ENCODE measurements at regions of chr5 and their contacts with region 1.

Region 1: GRCh38 chr5:142151436-142152383 is 43.1 kb downstream of the NDFIP1 start:
- DNase-seq: peak in 1 of 2 donors; percentile 36
- H3K4me3 ChIP-seq: no peak overlapping the region
- H3K27ac ChIP-seq: no peak overlapping the region
- H3K4me1 ChIP-seq: no peaks in the 10 kb centered on the region
- H3K27me3 ChIP-seq: no peaks in the 10 kb centered on the region
- CTCF ChIP-seq: peak; percentile 37 to 82 (median 75)
- POLR2A ChIP-seq: no peak

Region 2: GRCh38 chr5:141430332-141431113 is 721.2 kb before region 1 on chr5 and contains the start of gene PCDHGA12:
- intact Hi-C with region 1: no loop called
- DNase-seq: no peak
- H3K4me3 ChIP-seq: peak within 1 kb of the TSS; percentile 26 to 48 (median 36)
- H3K27ac ChIP-seq: no peak within 1 kb of the TSS
- H3K4me1 ChIP-seq: no peaks in the 10 kb centered on the region
- H3K27me3 ChIP-seq: no peaks in the 10 kb centered on the region
- CTCF ChIP-seq: no peak
- POLR2A ChIP-seq: no peak
- total RNA-seq, gene PCDHGA12: 9.8 to 12.0 (median 11.1) TPM

Region 3: DNA sequence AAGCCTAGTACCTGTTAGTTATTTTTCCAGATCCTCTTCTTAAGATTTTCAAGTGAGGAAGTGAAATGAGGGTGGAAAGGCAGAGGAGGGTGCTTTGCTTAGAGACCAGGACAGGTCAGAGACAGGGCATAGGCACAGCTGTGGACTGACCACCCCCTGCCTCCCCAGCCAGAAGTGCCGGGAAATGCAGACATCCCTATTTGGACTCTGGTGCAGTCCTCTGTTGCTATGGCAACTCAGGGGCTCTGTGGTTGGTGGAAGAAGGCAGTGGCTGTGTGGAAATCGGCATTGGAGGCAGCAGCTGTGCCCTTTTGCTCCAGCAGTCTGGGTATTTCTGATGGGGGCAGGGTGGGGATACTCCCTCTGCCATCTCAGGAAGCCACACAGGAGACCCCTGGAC is 86.4 kb before region 1 on chr5:
- intact Hi-C with region 1: no loop called
- DNase-seq: no peak
- H3K4me3 ChIP-seq: no peak overlapping the region
- H3K27ac ChIP-seq: no peak overlapping the region
- H3K4me1 ChIP-seq: no peaks in the 10 kb centered on the region
- H3K27me3 ChIP-seq: no peaks in the 10 kb centered on the region
- CTCF ChIP-seq: no peak
- POLR2A ChIP-seq: no peak

Region 4: GRCh38 chr5:142108432-142109330 is 43.0 kb before region 1 on chr5 and contains the start of gene NDFIP1:
- intact Hi-C with region 1: no loop called
- DNase-seq: peak; percentile 75 to 83
- H3K4me3 ChIP-seq: peak within 1 kb of the TSS; percentile 58 to 99 (median 83)
- H3K27ac ChIP-seq: peak within 1 kb of the TSS; percentile 98 to 100
- H3K4me1 ChIP-seq: peaks cover 3 to 6% of the 10 kb centered on the region in 2 donors
- H3K27me3 ChIP-seq: no peaks in the 10 kb centered on the region
- CTCF ChIP-seq: peak in 1 of 3 donors; percentile 31
- POLR2A ChIP-seq: peak; percentile 34
- total RNA-seq, gene NDFIP1: 115 to 135 (median 117) TPM

Region 5: DNA sequence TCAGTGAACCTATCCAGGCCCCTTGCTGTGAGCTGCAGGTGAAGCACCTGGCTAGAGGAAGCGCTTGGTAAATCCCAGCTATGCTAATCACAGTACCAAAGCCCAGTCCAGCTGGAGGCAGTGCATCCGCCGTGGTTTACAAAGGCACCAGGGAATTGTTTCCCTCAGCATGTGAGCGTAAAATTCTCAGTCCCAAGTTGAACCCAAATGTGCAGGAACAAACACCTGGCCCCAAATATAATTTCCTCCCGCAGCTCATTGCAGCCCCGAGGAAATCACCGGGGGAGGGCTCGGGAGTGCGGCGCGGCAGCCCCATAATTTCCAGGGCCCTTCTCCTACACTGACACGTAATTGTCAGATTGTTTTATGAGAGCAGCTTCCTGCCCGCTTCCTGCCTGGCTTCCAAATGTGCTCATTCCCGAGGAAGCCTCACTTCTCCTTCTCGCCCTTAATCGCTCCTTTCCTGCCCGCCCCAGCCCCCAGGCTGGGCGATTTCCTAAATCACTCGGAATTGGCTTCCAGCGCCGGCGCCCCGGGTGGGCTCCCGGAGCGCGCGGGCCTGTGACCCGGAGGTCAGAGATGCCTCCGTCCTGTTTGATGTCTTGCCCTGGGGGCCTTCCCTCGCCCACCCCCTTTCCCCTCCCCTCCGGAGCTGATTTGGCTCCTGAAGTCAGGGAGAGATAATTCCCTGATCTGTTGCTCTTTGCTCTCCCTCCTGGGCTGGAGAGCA is 399.8 kb after region 1 on chr5:
- intact Hi-C with region 1: loop called (anchors 2 kb)
- DNase-seq: no peak
- H3K4me3 ChIP-seq: peak overlapping the region; percentile 0 to 64 (median 37)
- H3K27ac ChIP-seq: peak overlapping the region in 1 of 2 donors; percentile 38
- H3K4me1 ChIP-seq: peaks cover 0 to 5% of the 10 kb centered on the region in 2 donors
- H3K27me3 ChIP-seq: no peaks in the 10 kb centered on the region
- CTCF ChIP-seq: no peak
- POLR2A ChIP-seq: no peak

Region 6: GRCh38 chr5:142977363-142978051 is 825.8 kb after region 1 on chr5:
- intact Hi-C with region 1: no loop called
- DNase-seq: peak in 1 of 2 donors; percentile 43
- H3K4me3 ChIP-seq: no peak overlapping the region
- H3K27ac ChIP-seq: peak overlapping the region; percentile 52 to 56
- H3K4me1 ChIP-seq: peaks cover 0 to 8% of the 10 kb centered on the region in 2 donors
- H3K27me3 ChIP-seq: no peaks in the 10 kb centered on the region
- CTCF ChIP-seq: no peak
- POLR2A ChIP-seq: no peak